AG04449 (cell line): ENCODE measurements at regions of chr15 and their contacts with region 1.

Region 1: DNA sequence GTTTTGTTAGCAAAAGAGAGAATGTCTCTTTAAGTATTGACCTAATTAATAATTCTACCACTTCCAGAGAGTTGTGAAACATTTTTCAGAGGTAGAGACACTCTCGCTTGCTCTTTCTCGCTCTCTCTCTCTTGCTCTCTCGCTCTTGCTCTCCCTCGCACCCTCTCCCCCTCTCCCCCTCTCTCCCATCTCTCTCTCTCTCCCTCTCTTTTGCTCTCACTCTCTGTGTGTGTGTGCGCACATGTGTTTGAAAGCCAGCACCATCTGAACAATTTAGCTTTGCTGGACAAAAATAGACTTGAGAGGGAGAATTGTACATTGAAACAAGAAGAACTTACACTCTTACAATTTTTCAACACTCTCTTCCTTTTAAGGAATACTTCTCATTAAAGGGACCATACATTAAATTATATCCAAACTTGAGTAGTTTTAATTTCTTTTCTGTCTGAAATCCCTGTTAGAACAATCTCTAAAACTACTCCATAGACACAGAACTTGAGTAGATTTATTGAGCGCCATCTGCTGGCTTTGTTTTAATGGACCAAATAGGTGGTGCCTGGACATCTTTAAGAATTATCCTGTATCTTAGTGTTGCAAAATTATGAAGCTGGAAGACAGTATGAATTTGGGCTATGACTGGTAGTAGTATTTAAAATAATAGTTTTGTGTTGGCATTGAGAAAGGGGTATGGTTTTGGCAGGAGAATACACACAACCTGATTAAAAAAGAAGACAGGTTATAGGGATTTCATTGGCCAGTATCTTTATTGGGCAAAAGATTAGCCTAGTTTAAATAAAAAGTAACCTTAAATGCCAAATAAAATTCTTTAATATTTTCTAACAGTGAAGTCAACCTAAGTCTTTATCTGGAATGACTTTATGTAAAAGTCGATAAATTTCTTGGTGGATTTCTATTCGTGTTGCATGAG is 124.6 kb downstream of the AKAP13 start:
- DNase-seq: no peak
- H3K4me3 ChIP-seq: no peak overlapping the region
- CTCF ChIP-seq: peak; percentile 34

Region 2: DNA sequence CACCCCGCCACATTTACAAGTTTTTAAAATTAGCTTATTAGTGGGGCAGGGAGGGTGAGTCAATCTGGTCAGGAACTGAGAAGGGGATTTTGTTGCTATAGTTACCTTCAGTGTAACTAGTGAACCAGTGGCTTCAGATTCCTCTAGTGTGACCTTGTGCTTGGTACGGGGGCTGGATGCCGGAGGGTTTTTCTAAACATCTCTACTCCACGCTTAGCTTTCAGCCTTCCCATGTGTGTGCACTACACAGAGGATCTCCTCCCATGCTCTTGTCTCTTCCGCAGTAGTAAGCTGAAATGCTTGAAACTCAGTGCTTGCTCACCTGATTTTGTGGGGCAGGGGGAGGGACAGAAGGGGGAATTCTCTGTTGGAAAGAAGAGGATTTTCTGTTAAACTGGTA is 192.5 kb before region 1 on chr15:
- CTCF ChIA-PET with region 1: interaction called, 14 read pairs
- POLR2A ChIA-PET with region 1: no interaction called
- DNase-seq: no peak
- H3K4me3 ChIP-seq: no peak overlapping the region
- CTCF ChIP-seq: no peak

Region 3: DNA sequence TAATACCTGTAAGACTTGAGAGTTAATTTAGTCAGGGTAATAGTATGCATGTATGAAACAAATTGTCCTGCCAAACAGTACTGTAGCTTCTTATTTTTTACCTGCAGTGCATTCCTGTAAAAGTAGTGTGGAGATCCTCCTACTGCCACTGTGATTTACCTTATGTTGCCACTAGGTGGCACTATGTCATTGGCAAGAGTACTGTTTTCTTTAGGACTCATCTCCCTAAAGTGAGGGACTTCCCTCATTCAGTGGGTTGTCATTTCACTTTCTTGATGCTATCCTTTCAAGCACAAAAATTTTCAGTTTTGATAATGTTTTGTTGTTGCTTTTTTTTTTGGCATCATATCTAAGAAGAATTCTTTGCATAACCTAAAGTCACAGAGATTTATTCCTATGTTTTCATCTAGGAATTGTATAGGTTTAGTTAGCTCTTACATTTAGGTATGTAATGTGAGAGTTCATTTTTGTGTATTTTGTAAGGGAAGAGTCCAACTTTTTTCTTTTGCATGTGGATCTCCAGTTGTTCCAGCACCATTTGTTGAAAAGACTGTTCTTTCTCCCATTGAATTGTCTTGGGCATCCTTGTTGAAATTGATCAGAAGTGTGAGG is 19.0 kb before region 1 on chr15:
- CTCF ChIA-PET with region 1: interaction called, 146 read pairs
- POLR2A ChIA-PET with region 1: no interaction called
- DNase-seq: no peak
- H3K4me3 ChIP-seq: no peak overlapping the region
- CTCF ChIP-seq: peak; percentile 65

Region 4: DNA sequence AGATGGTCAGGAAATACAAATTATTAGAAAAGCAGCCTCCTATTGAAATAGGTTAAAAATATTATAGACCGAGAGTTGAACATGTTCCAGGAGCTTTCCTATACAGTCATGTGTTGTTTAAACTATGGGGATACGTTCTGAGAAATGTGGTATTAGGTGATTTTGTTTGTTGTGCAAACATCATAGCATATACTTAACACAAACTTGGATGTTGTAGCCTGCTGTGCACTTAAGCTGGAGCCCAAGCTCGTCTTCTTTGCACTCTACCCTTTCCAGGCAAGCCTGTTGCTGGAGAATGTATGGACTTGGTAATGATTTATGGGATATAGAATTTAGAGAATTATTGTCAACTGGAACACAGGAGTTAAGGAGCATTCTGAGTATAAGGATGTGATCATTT is 15.6 kb after region 1 on chr15:
- CTCF ChIA-PET with region 1: interaction called, 19 read pairs
- POLR2A ChIA-PET with region 1: no interaction called
- DNase-seq: no peak
- H3K4me3 ChIP-seq: no peak overlapping the region
- CTCF ChIP-seq: no peak